Gastrocnemius medialis (tissue), 4 donors: ENCODE measurements at regions of chr16 and their contacts with region 1.

Region 1: DNA sequence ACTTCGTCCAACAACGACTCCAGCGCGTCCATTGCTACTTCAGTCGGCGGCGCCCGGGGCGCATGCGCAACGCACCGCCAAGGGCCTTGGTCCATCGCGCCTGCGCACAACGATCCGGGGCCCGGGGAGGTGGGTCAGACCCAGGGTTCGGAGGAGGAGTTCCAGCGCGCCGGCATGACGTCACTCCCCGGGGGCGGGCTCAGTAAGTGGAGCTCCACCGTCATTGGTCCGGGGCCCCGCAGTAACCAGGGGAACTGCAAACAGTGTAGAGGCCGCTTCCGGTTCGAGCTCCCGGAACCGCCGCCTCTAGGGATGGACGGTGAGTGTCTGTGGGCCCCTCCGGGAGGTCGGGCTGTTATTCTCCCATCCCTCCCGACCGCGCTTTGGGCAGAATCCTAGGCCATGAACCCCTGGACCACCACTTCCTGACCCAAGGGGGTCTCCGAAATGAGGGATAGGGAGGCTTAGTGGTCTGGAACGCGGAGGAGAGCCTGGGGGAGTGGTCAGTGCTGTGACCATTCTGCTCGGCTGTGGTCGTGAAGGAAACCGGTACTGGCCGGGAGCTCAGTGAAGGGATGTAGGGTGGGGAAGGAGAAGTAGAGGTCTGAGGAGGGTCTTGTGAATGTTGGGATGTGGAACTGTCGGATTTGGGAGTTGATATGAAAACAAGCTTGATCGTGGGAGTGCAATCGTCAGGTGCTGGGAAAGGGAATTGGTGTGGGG is at the starts of genes GTF3C1 and KATNIP:
- DNase-seq: peak; percentile 99 to 100
- ATAC-seq: peak; percentile 94 to 97
- H3K4me3 ChIP-seq: peak within 1 kb of the TSS; percentile 84 to 99 (median 98)
- H3K27ac ChIP-seq: peak within 1 kb of the TSS; percentile 83 to 91 (median 88)
- H3K4me1 ChIP-seq: peaks cover 35 to 36% of the 10 kb centered on the region in 2 donors
- H3K27me3 ChIP-seq: no peaks in the 10 kb centered on the region
- CTCF ChIP-seq: no peak
- POLR2A ChIP-seq: peak; percentile 82
- total RNA-seq, gene GTF3C1: 52.0 to 108 (median 67.8) TPM
- total RNA-seq, gene KATNIP: 6.3 to 12.1 (median 7.7) TPM

Region 2: GRCh38 chr16:27483624-27484023 is 66.4 kb before region 1 on chr16:
- in situ Hi-C with region 1: no loop called
- intact Hi-C with region 1: loop called (anchors 2 kb)
- DNase-seq: peak in 1 of 2 donors; percentile 31
- ATAC-seq: peak in 1 of 2 donors; percentile 15
- H3K4me3 ChIP-seq: no peak overlapping the region
- H3K27ac ChIP-seq: peak overlapping the region; percentile 78 to 88 (median 82)
- H3K4me1 ChIP-seq: peaks cover 22 to 24% of the 10 kb centered on the region in 2 donors
- H3K27me3 ChIP-seq: no peaks in the 10 kb centered on the region
- CTCF ChIP-seq: no peak
- POLR2A ChIP-seq: no peak

Region 3: GRCh38 chr16:27495191-27495590 is 54.8 kb before region 1 on chr16:
- in situ Hi-C with region 1: no loop called
- intact Hi-C with region 1: loop called (anchors 5 kb)
- DNase-seq: no peak
- ATAC-seq: no peak
- H3K4me3 ChIP-seq: no peak overlapping the region
- H3K27ac ChIP-seq: no peak overlapping the region
- H3K4me1 ChIP-seq: peaks cover 3 to 12% of the 10 kb centered on the region in 2 donors
- H3K27me3 ChIP-seq: no peaks in the 10 kb centered on the region
- CTCF ChIP-seq: no peak
- POLR2A ChIP-seq: no peak

Region 4: GRCh38 chr16:28309811-28310311 is 759.8 kb after region 1 on chr16:
- in situ Hi-C with region 1: no loop called
- intact Hi-C with region 1: no loop called
- DNase-seq: no peak
- ATAC-seq: no peak
- H3K4me3 ChIP-seq: no peak overlapping the region
- H3K27ac ChIP-seq: no peak overlapping the region
- H3K4me1 ChIP-seq: no peaks in the 10 kb centered on the region
- H3K27me3 ChIP-seq: no peaks in the 10 kb centered on the region
- CTCF ChIP-seq: no peak
- POLR2A ChIP-seq: no peak